ENCODE measurements at regions of chr10 and their contacts with region 1.

Region 1: DNA sequence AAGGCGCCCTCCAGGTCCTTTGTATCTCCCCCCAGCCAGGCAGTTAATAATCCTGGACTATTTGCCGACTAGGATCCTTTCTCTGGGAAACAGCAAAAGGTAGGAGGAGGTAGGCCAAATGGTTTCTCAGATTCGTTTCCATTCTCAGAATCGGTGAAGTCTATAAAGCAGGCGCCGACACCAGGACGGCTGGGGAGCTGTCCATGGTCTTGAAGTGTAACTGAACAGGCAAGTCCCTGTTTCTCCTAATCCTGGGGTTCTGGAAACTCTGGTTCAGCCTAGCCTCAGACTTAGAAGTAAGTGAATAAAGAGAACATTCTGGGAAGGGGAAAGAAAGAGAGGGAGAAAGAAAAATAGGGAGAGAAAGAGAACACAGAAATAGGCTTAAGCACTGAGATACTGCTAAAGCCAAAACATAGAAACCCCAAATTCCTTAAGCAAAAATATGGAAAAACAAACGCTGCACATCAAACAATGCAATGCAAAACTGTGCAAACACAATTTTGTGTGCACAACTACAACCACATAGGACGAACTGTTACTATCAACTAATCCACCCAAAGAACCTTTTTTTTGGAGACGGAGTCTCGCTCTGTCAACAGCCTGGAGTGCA is 11.1 kb upstream of the INA start:
- H3K4me3 Mint-ChIP-seq: no peak overlapping the region
- H3K27ac Mint-ChIP-seq: no peak overlapping the region
- H3K4me1 Mint-ChIP-seq: no peaks in the 10 kb centered on the region
- H3K27me3 Mint-ChIP-seq: peaks cover 40% of the 10 kb centered on the region

Region 2: DNA sequence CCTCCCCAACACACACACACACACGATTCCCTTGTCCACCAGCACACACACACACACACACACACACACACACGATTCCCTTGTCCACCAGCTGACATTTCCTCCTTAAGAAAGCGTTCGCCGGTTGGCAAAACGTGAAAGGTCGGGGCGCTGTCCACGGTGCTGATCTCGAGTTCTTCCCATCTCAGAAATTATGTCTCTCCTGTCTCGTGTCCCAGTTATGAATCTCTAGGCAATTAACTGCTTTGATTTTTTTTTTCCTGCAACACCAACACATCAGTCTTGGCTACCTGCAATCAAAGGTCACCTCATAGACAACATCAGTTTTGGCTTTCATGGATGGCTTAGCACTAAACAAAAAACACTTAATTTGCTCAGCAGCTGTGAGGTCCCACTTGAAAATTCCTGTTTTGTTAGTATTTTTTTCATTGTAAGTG is 13.1 kb after region 1 on chr10:
- intact Hi-C with region 1: loop called (anchors 2 kb)
- H3K4me3 Mint-ChIP-seq: no peak overlapping the region
- H3K27ac Mint-ChIP-seq: no peak overlapping the region
- H3K4me1 Mint-ChIP-seq: peaks cover 29% of the 10 kb centered on the region
- H3K27me3 Mint-ChIP-seq: peaks cover 74% of the 10 kb centered on the region

Region 3: GRCh38 chr10:103542764-103543616 is 277.2 kb after region 1 on chr10:
- intact Hi-C with region 1: no loop called
- H3K4me3 Mint-ChIP-seq: peak overlapping the region; percentile 58
- H3K27ac Mint-ChIP-seq: no peak overlapping the region
- H3K4me1 Mint-ChIP-seq: peaks cover 17% of the 10 kb centered on the region
- H3K27me3 Mint-ChIP-seq: peaks cover 44% of the 10 kb centered on the region

Measured in dendritic cell treated with granulocyte-macrophage colony-stimulating factor and Interleukin-4, amounts not matched to agents 40 ng/mL and 50 ng/mL, for 4 days (primary cell).